ENCODE measurements at regions of chr10 and their contacts with region 1.

Region 1: DNA sequence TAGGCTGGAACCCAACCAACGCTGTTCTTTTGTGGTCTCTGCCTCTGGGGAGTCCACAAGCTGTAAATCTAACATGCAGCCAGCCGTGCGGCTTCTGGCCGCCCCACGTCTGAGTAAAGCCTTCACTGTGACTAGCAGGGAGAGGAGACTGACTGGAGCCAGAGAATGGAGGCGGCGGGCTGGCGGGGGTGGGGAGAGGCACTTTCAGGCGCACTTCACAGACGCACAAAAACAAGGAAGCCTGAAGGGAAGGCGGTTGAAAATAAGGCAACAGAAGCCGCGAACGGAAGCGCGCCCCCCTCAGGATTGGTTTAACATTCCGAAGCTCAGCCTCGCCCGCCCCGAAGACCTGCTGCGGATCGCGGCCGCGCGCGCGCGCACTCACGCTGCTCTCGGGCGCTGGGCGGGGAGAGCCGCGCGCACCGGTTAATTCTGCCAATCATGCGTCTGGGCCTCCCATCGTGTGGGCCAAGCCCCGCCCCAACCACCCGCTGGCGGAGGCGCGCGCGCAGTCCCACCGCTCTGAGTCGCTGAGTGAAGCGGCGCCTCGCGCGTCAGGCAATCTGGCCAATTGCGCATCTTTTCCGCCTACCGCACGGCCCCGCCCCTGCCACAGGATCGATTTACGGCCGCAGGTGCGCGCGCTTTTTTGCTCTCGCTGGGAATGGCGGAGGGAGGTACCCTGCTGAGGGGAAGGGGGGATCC is at the start of gene SFR1:
- DNase-seq: peak; percentile 94
- CTCF ChIP-seq: peak; percentile 65

Region 2: DNA sequence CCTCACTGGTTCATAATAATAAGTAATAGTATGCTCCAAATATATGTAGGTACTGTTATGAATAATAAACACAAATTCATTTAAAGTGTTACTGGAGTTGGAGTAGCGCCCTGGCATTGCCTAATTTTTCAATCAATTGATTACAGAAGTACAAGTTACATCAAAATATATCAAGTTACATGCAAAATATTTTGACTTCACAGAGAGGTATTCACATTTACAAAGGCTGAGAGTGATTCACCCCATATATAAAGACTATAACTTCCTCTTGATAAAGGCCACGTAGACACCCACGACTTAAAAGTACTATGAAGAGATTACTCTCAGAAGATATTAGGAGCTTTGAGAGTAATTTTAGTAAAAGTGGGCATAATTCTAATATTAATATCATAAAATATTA is 22.4 kb before region 1 on chr10:
- CTCF ChIA-PET with region 1: interaction called, 17 read pairs
- POLR2A ChIA-PET with region 1: interaction called, 3 read pairs
- DNase-seq: no peak
- CTCF ChIP-seq: no peak

Region 3: DNA sequence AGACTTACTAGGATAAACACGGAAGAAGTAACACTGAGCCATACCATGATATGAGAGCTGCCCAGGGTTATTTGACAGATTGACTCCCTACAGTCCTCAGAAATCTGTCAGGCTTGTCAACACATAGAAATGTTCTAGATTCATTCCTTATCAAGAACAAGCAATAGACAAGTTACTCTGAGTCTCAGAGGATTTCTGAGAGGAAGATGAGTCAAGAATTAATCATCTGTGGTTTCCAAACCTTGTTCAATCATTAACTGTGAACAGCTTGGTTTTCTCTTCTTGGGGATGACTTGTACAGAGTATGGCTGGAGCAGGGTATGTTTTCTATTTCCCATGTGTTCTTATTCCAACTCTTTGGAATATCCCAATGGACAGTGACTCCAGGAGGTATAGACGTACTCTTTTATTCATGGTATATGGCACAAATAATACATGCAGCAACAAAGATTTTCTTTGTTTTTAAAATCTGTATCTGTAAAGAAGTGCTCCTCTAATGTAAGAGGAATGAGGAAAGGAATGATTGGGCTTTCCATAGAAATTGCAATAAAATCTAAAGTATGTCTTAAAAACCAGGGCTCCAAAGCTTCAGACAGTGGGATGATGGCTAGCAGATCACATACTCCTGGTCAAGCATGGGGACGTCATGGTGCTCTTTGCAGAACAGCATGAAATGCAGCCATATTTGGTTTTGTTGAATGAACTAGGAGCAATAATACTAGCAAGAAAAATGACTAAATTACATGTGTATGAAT is 11.6 kb before region 1 on chr10:
- CTCF ChIA-PET with region 1: interaction called, 30 read pairs
- POLR2A ChIA-PET with region 1: no interaction called
- DNase-seq: no peak
- CTCF ChIP-seq: no peak

Measured in GM10248 (cell line).